Heart right ventricle (tissue), 16 donors: ENCODE measurements at regions of chr12 and their contacts with region 1.

Region 1: GRCh38 chr12:124506145-124506831 is 61.1 kb downstream of the NCOR2 start:
- DNase-seq: peak; percentile 86 to 89
- ATAC-seq: peak in 7 of 8 donors; percentile 38 to 79 (median 59)
- H3K4me3 ChIP-seq: peak overlapping the region in 6 of 10 donors; percentile 5 to 26 (median 22)
- H3K27ac ChIP-seq: peak overlapping the region; percentile 2 to 93 (median 86)
- H3K4me1 ChIP-seq: peaks cover 36 to 97% (median 86%) of the 10 kb centered on the region in 9 donors
- H3K27me3 ChIP-seq: no peaks in the 10 kb centered on the region
- CTCF ChIP-seq: no peak

Region 2: DNA sequence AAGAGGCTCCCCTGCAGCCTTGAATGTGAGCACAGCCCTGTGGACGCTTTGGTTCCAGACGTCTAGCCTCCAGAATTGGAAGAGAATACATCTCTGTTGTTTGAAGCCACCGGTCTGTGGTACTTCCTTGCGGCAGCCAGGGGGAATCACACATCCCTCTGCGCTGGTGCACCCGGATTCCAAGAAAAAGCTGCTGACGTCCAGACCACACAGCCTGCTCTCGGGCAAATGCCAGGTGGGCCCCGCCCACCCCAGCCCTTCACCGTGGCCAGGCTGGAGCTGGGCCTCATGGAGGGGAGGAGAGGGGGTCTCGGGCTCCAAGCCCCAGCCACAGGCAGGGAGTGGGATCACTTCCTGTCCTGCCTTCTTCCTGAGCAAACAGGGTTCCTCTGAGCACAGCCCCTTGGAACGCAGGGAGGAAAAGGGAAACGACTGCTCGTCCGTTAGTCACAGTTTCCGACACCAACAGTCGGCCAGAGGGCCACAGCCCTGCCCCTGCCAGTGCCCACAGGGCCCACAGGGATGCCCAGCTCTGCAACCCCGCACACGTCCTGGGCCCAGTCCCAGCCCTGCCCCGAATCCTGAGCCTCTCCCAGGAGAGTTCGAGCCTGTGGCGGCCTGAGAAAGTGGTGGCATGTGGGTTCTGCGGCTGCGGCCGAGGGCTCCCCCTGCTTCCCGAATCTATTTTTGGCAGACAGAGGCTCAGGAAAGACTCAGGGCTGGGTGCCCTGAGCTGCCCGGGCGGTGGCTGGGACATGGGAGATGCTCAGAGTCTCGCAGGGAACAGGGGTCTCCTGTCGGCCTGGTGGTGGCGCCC is 126.1 kb before region 1 on chr12:
- intact Hi-C with region 1: loop called in 2 of 10 experiments (anchors 5 to 10 kb)
- DNase-seq: peak; percentile 62 to 78
- ATAC-seq: peak; percentile 36 to 69 (median 59)
- H3K4me3 ChIP-seq: peak overlapping the region in 2 of 10 donors; percentile 9 to 23
- H3K27ac ChIP-seq: peak overlapping the region; percentile 82 to 99 (median 87)
- H3K4me1 ChIP-seq: peaks cover 38 to 70% (median 54%) of the 10 kb centered on the region in 9 donors
- H3K27me3 ChIP-seq: no peaks in the 10 kb centered on the region
- CTCF ChIP-seq: peak; percentile 29 to 73 (median 61)

Region 3: DNA sequence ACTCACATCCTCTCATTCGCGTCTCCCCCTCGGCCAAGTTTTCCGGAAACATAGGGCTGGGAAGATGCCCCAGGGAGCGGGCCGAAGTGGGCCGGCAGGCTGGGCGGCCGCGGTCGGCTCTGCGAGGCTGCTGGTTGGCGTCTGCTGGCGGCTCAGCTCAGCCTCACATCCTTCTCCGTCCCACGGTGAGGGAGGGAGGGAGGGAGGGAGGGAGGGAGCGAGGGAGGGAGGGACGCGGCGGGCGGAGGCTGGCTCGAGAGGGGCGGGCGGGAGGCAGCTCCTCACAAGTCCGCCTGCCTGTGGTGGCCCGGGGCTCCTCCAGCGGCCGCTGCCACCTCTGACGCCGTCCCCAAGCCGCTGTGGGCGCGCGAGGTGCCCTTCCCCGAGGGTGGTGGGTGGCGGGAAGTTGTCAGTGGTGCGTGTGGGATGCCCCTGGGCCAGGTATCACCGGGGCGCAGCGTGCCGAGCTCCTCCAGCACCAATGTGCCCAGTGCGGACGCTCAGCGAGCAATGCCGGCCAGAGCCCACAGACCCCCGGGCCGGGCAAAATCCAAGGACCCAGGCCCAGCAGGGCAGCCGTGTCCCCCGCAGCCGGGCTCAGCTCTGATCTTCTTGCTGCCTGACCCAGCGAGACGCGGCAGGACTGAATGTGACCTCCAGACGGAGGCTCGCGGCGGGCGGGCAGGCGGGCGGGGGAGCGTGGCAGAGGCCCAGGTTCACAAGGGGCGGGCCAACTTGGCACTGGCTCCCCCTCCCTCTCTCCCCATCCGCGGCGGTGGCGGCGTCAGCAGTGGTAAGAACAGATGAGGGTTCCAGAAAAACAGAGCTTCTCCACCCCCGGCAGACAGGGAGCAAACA is 117.4 kb before region 1 on chr12:
- intact Hi-C with region 1: loop called in 3 of 10 experiments (anchors 5 to 10 kb)
- DNase-seq: peak; percentile 86 to 89
- ATAC-seq: peak; percentile 53 to 71 (median 60)
- H3K4me3 ChIP-seq: peak overlapping the region; percentile 41 to 74 (median 59)
- H3K27ac ChIP-seq: peak overlapping the region; percentile 88 to 99 (median 97)
- H3K4me1 ChIP-seq: peaks cover 61 to 100% (median 89%) of the 10 kb centered on the region in 9 donors
- H3K27me3 ChIP-seq: no peaks in the 10 kb centered on the region
- CTCF ChIP-seq: peak in 3 of 9 donors; percentile 8 to 32 (median 25)

Region 4: DNA sequence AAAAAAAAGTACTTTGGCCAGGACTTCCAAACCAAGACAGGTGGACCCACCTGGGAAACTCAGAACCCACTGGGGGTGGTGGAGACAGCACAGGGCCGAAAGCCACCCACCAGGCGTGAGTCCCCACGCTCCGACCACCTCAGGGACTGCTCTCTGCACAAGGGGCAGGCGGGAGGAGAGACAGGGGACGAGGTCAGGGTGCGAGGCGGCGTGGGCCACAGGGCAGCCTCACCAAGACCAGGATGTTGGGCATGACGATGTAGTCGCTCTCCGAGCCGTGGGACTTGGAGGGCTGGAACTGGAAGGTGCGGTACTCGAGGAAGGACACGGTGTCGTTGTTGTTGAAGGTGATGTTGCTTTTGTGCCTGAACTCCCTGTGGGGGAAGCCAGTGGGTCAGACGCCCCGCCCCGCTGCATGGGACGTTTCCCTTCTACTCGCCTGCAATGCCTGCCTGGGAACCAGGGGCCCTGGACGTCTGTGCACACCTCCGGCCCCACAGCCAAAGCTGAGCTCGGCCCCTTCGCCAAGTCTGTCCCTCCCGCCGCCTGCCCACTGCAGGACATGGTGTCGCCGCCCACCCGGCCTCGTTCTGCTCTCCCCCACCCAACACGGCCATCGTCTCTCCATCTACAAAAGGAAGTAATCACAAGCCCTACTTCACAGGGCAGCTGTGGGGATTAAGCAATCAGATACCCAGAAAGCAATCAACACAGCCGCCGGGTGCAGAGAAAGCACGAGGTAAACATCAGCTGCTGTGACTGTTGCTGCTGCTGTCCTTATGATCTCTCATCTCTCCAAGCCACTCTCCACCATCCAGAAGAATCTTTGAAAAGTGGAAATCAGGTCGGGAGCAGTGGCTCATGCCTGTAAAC is 308.7 kb after region 1 on chr12:
- intact Hi-C with region 1: no loop called
- DNase-seq: no peak
- ATAC-seq: peak in 3 of 8 donors; percentile 9 to 21 (median 14)
- H3K4me3 ChIP-seq: no peak overlapping the region
- H3K27ac ChIP-seq: no peak overlapping the region
- H3K4me1 ChIP-seq: no peaks in the 10 kb centered on the region
- H3K27me3 ChIP-seq: no peaks in the 10 kb centered on the region
- CTCF ChIP-seq: no peak